ENCODE measurements at regions of chr12 and their contacts with region 1.

Region 1: DNA sequence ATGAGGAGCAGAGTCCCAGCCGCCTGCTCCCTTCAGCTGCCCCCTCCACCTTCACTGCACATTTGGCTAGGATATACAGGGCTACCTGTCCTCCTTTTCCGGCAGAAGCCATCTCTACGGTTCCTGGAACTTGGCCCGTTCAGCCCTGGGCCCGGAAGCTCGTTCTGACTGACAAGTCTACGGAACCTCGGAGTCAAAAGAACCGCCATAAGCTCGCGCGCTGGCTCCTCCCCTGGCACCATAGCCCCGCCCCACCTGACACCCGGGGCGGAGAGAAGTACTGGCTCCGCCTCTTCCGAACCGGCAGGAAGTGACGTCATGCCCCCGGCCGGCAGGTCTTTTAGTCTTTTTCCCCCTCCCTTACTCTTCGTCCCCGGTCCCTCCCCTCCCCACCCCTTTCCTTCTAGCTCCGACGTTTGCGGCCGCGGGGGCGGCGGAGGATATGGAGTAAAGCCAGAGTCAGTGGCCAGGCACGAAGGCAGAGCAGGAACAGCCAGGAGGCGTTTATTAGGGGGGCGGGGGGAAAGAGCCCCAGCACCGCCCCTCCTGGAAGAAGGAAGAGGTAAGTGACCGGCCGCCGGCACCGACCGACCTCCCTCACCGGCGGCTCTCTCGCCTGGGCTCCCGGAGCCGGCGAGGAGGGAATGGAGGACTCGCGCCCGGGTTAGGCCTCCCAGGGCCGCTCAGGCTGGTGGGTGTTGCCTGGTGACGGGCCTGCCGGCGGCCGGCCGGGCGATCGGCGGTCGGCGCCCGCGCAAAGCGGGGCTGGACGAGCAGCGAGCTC is at the starts of genes DEPDC4 and SCYL2:
- DNase-seq: peak; percentile 95
- H3K4me3 Mint-ChIP-seq: peak within 1 kb of the TSS; percentile 96
- H3K27ac Mint-ChIP-seq: peak within 1 kb of the TSS; percentile 97
- H3K4me1 Mint-ChIP-seq: peaks cover 28% of the 10 kb centered on the region
- H3K27me3 Mint-ChIP-seq: no peaks in the 10 kb centered on the region
- total RNA-seq, gene DEPDC4: 3.4 to 3.6 TPM
- total RNA-seq, gene SCYL2: 19.4 to 20.7 TPM

Region 2: GRCh38 chr12:98503592-98504367 is 1763.2 kb before region 1 on chr12:
- CTCF ChIA-PET with region 1: no interaction called
- intact Hi-C with region 1: loop called (anchors 5 kb)
- DNase-seq: peak; percentile 97
- H3K4me3 Mint-ChIP-seq: peak overlapping the region; percentile 97
- H3K27ac Mint-ChIP-seq: peak overlapping the region; percentile 100
- H3K4me1 Mint-ChIP-seq: peaks cover 16% of the 10 kb centered on the region
- H3K27me3 Mint-ChIP-seq: peaks cover 8% of the 10 kb centered on the region

Region 3: DNA sequence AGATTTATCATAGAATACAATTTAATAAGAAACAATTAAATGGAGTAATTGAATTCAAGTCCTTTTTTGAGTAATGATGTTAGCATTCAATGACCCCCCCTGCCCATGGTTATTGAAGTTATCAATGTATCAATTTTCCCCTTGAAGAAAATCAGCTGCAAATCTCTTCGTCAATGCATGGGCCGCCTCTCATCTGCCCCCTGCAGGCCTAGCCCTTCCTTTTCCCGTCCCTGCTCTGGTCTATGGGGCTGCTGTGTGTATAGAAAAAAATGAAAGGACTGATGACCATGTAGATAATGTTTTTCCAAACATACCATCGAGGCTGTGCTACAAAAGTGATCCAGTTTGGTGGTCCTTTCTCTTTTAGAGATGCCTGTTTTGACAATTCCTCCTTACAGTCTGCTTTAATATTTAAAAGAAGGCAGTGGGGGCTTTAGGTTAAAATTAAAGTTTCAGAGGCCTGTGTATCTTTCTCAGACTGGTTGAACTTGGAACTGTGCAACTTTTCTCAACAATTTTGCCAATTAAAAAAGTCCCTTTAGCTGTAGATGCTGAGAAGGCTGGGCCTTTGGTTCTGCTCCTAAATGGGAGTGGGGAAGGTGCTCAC is 1523.6 kb before region 1 on chr12:
- CTCF ChIA-PET with region 1: no interaction called
- intact Hi-C with region 1: loop called (anchors 2 kb)
- DNase-seq: peak; percentile 60
- H3K4me3 Mint-ChIP-seq: no peak overlapping the region
- H3K27ac Mint-ChIP-seq: no peak overlapping the region
- H3K4me1 Mint-ChIP-seq: peaks cover 21% of the 10 kb centered on the region
- H3K27me3 Mint-ChIP-seq: peaks cover 22% of the 10 kb centered on the region

Region 4: DNA sequence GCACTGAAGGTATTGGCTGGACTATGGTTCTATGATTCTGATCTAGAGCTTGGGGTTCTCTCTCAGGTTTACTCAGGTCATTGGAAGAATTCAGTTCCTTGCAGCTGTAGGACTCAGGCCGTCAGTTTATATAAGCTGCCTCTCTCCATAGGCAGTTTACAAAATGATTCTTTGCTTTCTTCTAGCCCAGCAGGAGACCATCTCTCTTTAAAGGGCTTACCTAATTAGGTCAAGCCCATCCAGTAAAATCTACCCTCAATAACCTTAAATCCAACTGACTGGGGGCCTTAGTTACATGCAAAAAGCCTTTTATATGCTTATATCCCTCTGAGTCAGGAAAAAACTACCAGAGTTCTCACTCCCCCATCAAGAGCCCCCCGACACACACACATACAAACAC is 700.0 kb before region 1 on chr12:
- CTCF ChIA-PET with region 1: no interaction called
- intact Hi-C with region 1: no loop called
- DNase-seq: no peak
- H3K4me3 Mint-ChIP-seq: no peak overlapping the region
- H3K27ac Mint-ChIP-seq: no peak overlapping the region
- H3K4me1 Mint-ChIP-seq: no peaks in the 10 kb centered on the region
- H3K27me3 Mint-ChIP-seq: no peaks in the 10 kb centered on the region

Region 5: GRCh38 chr12:100154474-100155247 is 112.4 kb before region 1 on chr12:
- CTCF ChIA-PET with region 1: no interaction called
- intact Hi-C with region 1: no loop called
- DNase-seq: peak; percentile 79
- H3K4me3 Mint-ChIP-seq: no peak overlapping the region
- H3K27ac Mint-ChIP-seq: no peak overlapping the region
- H3K4me1 Mint-ChIP-seq: peaks cover 6% of the 10 kb centered on the region
- H3K27me3 Mint-ChIP-seq: no peaks in the 10 kb centered on the region

Region 6: GRCh38 chr12:100200463-100201181 is 66.4 kb before region 1 on chr12 and contains the start of gene ACTR6:
- CTCF ChIA-PET with region 1: no interaction called
- intact Hi-C with region 1: loop called (anchors 1 kb)
- DNase-seq: peak; percentile 98
- H3K4me3 Mint-ChIP-seq: peak within 1 kb of the TSS; percentile 99
- H3K27ac Mint-ChIP-seq: peak within 1 kb of the TSS; percentile 99
- H3K4me1 Mint-ChIP-seq: peaks cover 27% of the 10 kb centered on the region
- H3K27me3 Mint-ChIP-seq: no peaks in the 10 kb centered on the region
- total RNA-seq, gene ACTR6: 38.0 to 41.8 TPM

Region 7: DNA sequence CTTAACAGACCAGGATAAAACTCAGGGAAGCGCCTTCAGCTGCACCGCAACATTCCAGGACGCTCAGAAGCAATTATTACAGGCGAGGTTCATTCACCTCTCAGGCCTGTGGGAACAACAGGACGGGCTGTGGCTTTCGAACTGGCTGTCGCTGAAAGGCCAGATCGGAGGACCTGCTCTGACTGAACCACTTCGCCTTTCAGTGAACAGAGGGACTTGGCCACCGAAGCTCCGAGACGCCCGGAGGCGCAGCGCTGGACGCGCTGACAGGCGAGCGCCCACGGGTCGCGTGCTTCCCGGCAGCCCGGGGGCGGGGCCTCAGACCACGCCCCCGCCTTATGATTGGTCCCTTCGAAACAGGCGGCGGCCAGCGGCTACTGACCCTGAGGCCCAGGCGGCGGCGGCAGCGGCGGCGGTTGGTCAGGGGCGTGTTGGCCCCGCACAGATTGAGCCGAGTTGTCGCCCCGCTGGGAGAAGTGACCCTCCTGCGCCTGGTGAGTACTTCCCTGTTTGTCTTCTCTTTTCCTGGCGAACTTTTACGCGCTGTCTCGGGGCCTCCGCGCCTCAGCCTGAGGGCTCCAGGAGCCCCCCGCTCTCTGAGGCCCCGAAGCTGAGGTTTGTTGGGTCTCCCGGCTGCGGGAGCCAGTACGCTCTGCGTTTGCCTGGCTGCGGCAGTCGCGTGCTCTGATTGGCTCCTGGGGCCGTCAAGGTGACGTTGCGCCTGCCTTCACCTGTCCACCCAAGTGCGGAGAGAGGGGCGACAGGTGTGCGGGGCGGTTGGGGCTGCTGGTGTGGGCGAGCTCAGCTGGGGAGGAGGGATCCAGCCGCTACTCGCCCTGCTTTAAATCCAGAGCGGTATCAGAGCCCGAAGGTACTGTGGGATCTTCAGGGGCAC is 306.5 kb after region 1 on chr12 and contains the start of gene GAS2L3:
- CTCF ChIA-PET with region 1: no interaction called
- intact Hi-C with region 1: loop called (anchors 1 kb)
- DNase-seq: peak; percentile 67
- H3K4me3 Mint-ChIP-seq: peak within 1 kb of the TSS; percentile 91
- H3K27ac Mint-ChIP-seq: no peak within 1 kb of the TSS
- H3K4me1 Mint-ChIP-seq: peaks cover 8% of the 10 kb centered on the region
- H3K27me3 Mint-ChIP-seq: peaks cover 30% of the 10 kb centered on the region
- total RNA-seq, gene GAS2L3: 4.7 to 5.5 TPM

Region 8: DNA sequence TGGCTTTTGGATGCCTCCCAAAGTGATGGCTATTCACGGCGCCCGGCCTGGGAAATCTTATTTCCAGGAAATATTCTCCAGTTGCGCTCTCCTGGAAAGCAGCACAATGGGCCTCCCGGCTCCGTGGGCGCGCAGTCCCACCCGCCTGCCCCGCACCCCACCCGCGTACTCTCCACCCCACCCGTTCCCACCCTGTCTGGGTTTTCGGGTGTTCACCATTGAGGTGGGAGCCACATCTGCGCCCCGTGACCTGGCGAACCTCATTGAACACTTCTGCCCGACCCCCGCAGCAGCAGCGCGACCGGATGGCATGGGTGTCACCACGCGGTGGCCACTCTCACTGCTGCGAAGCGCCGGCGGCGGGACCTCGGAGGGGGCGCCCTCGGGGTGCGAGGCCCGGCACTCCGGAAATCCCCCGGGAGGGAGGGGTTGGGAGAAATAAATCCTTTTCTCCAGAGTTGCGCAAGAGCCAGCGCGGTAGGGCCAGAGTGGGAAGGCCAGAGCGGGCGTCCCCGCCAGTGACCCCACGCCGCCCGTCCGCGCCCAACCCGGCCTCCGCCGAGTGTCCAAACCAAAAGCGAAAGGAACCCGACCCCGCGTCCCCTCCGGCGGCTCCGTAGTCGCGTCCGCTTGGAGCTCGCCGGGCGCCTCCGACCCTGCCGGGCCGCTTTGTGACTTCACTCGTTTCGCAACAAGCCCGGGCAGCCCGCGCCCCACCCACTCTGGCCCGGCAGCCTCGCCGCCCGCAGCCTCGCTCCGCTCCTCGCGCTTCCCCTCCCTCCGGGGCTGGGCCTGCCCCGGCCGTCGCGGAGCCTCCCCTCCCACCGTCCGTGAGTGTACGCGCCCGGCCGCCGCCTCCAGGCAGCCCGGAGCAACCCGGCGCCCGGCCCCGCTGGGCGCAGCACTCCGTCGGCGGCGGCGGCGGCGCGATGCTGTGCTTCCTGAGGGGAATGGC is 1610.1 kb after region 1 on chr12 and contains the start of gene DRAM1:
- CTCF ChIA-PET with region 1: no interaction called
- intact Hi-C with region 1: loop called (anchors 5 kb)
- DNase-seq: peak; percentile 83
- H3K4me3 Mint-ChIP-seq: peak within 1 kb of the TSS; percentile 91
- H3K27ac Mint-ChIP-seq: peak within 1 kb of the TSS; percentile 64
- H3K4me1 Mint-ChIP-seq: peaks cover 12% of the 10 kb centered on the region
- H3K27me3 Mint-ChIP-seq: peaks cover 3% of the 10 kb centered on the region
- total RNA-seq, gene DRAM1: 4.1 to 4.9 TPM

Measured in activated naive CD4-positive, alpha-beta T cell treated with anti-CD3 and anti-CD28 coated beads for 36 hours (primary cell).